ENCODE measurements at regions of chr7 and their contacts with region 1.

Region 1: DNA sequence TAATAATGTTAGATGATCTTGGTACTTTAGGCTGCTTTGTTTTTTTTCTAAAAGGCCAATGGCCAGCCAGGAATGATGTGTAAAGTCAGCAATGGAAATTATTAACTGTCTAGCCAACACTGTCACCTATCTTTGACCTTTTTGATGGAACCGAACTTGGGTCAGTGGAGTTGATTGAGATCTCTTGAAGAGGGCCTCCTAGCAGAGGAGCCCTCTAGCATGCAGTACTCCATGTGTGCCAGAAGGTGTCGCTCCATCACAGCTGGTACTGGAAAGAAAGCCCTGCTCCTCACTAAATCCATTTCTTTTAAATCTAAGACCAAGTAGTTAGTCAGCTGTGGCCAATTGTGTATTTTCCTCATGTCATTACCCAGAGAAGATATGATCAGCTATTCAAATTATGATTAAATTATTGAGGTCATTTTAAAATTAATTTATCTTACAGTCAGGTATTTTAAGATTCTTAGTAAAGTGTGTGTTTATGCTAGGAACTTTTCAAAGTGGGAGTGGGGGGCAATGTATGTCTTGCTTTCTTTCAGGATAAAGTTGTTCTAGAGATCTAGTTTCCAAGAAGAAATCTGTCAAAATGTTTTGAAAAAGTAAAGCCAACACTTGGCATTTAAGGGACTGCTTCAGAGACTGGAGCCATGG is 33.1 kb upstream of the CROT start:
- DNase-seq: no peak
- ATAC-seq: peak; percentile 89
- H3K4me3 Mint-ChIP-seq: no peak overlapping the region
- H3K27ac Mint-ChIP-seq: no peak overlapping the region
- H3K4me1 Mint-ChIP-seq: no peaks in the 10 kb centered on the region
- H3K27me3 Mint-ChIP-seq: peaks cover 2% of the 10 kb centered on the region
- CTCF ChIP-seq: peak; percentile 99

Region 2: DNA sequence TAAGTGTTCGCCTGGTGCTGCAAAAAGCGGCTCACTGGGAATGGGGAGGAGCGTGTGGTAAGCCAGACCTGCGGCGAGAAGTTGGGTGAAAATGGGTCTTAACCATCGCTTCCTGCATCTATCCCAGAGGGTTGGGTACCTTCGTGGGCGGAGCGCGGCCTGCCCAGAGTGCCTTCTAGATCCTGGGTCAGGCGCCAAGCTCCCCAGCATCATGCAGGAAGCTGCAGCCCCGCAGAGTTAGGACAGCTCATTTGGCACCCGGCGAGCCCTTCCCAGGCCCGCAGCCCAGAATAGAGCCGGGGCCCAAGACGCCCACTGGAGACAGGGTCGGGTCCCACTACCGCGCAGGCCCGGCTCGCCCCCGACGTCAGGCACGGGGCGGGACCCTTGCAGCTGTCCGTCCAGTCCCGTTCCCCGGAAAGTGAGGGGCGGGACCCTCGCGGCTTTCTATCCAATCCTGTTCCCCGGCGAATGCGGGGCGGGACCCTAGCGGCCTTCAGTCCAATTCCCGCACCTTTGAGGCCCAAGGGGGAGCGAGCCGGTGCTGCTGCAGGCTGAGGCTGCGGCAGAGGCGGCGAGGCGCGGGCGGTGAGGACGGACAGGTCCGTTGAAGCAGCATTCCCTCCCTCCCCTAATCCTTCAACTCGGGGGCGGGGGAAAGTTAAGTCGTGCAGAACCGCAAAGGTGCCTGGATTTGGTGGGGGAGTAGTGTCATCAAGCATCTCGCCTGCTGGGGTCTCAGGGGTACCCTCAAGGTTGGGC is 33.0 kb after region 1 on chr7 and contains the start of gene CROT:
- CTCF ChIA-PET with region 1: interaction called, 8 read pairs
- POLR2A ChIA-PET with region 1: no interaction called
- intact Hi-C with region 1: loop called (anchors 2 kb)
- DNase-seq: peak; percentile 95
- ATAC-seq: peak; percentile 98
- H3K4me3 Mint-ChIP-seq: peak within 1 kb of the TSS; percentile 96
- H3K27ac Mint-ChIP-seq: peak within 1 kb of the TSS; percentile 96
- H3K4me1 Mint-ChIP-seq: peaks cover 25% of the 10 kb centered on the region
- H3K27me3 Mint-ChIP-seq: no peaks in the 10 kb centered on the region
- CTCF ChIP-seq: no peak
- total RNA-seq, gene CROT: 7.9 and 9.2 TPM in 2 replicates

Region 3: GRCh38 chr7:87564289-87564963 is 252.1 kb after region 1 on chr7:
- CTCF ChIA-PET with region 1: no interaction called
- POLR2A ChIA-PET with region 1: no interaction called
- intact Hi-C with region 1: loop called (anchors 1 kb)
- DNase-seq: no peak
- ATAC-seq: peak; percentile 72
- H3K4me3 Mint-ChIP-seq: no peak overlapping the region
- H3K27ac Mint-ChIP-seq: no peak overlapping the region
- H3K4me1 Mint-ChIP-seq: peaks cover 5% of the 10 kb centered on the region
- H3K27me3 Mint-ChIP-seq: no peaks in the 10 kb centered on the region
- CTCF ChIP-seq: no peak

Region 4: GRCh38 chr7:87797798-87798403 is 485.6 kb after region 1 on chr7:
- CTCF ChIA-PET with region 1: no interaction called
- POLR2A ChIA-PET with region 1: no interaction called
- intact Hi-C with region 1: loop called (anchors 2 kb)
- DNase-seq: no peak
- ATAC-seq: peak; percentile 40
- H3K4me3 Mint-ChIP-seq: no peak overlapping the region
- H3K27ac Mint-ChIP-seq: no peak overlapping the region
- H3K4me1 Mint-ChIP-seq: no peaks in the 10 kb centered on the region
- H3K27me3 Mint-ChIP-seq: peaks cover under 1% of the 10 kb centered on the region
- CTCF ChIP-seq: no peak

Region 5: DNA sequence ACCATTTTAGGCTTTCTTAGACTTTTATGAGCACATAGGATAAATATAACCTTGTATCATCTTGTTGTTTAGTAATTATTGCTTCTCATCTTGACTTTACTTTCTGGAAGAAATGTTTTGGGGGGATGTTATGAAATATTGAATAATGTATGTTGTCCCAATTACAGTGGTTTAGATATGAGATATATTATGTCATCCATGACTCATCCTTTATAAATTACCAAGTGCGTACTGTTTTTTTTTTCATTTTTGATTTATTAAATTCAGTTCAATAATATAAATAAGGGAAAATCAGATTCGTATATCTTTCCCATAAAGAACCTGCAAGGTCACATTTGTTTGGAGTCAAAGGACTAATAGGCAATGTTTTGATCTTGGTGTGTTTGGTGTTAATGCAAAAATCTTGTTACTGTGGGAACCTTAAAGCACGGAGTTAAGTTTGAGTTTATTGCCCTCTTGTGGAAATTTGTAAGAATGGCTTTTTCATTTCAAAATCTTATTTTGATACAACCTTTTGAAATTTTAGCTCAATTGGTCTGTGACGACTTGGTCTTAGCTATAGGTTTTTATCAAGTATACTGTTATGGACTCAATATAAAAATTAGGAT is 798.9 kb after region 1 on chr7:
- CTCF ChIA-PET with region 1: no interaction called
- POLR2A ChIA-PET with region 1: no interaction called
- intact Hi-C with region 1: loop called (anchors 1 kb)
- DNase-seq: no peak
- ATAC-seq: no peak
- H3K4me3 Mint-ChIP-seq: no peak overlapping the region
- H3K27ac Mint-ChIP-seq: no peak overlapping the region
- H3K4me1 Mint-ChIP-seq: no peaks in the 10 kb centered on the region
- H3K27me3 Mint-ChIP-seq: no peaks in the 10 kb centered on the region
- CTCF ChIP-seq: no peak

Region 6: DNA sequence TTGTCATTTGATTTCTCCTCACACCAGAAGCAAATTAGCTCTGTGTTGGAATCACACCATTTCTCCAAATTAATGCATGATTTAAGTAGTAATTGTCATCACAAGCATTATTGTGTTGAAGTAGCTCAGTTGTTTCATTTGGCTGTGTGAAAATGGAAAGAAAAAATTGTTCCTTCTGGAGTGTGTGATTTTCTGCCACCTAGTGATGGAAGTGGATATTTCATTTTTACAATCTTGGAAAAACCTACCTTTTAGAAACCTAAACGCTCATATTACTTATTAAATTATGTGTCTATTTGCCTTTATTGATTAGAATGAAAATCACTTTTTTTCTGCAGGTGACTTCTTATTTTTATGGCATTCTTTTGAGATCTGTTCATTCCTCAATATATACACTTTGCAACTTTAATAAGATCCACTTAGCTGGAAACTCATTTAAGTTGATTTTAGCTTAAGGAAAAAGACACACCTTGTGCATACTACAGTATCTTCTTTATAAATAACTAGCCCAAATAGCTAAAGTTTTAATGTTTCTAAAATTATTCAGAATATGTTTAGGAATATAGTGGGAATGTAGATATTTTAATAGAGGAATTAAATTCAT is 857.5 kb after region 1 on chr7:
- CTCF ChIA-PET with region 1: no interaction called
- POLR2A ChIA-PET with region 1: no interaction called
- intact Hi-C with region 1: loop called (anchors 2 kb)
- DNase-seq: no peak
- ATAC-seq: no peak
- H3K4me3 Mint-ChIP-seq: no peak overlapping the region
- H3K27ac Mint-ChIP-seq: no peak overlapping the region
- H3K4me1 Mint-ChIP-seq: no peaks in the 10 kb centered on the region
- H3K27me3 Mint-ChIP-seq: no peaks in the 10 kb centered on the region
- CTCF ChIP-seq: peak; percentile 17